Thyroid gland (tissue), 4 donors: ENCODE measurements at regions of chr7 and their contacts with region 1.

Region 1: DNA sequence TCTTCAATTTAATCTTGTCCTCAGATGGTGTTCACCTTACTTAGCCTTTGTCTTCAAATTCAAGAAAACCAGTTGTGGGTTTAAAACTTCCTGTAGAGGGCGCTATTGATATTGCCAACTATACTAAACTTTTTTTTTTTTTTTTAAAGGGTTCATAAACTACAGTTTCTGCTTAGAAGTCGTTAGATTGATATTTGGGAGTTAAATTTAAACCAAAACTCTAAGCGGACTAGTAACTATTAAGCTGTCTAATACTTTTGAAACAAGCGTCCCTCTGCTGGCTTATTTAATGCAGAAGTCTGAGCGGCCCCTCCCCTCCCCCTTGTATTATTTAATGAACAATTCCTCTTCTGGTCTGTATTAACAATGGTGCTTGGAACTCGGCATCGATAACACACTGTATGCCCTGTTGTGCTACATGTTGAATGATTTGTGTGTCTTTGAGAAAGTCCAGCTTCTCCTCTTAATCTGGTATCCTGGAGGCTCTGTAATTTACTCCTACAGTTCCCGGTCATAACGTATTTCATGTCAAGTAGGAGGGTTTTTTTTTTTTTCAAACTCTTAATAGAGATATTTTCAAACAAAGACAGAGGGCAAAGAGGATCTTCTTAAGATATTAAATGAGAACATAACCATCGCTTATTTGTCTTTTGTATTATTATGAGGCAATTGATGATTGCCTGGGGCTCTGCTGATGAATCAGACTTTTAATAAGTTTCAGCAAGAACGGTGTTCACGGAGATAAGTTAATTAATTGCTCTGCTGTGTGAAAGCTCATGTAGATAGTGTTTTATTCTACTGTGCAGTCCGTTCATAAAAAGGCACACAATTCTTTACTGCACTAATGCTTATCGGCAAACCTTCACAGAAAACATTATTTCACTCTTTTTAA is 22.6 kb upstream of the CREB5 start:
- DNase-seq: no peak
- H3K4me3 ChIP-seq: no peak overlapping the region
- H3K27ac ChIP-seq: no peak overlapping the region
- H3K4me1 ChIP-seq: no peaks in the 10 kb centered on the region
- H3K27me3 ChIP-seq: no peaks in the 10 kb centered on the region
- CTCF ChIP-seq: peak; percentile 37 to 80 (median 66)
- POLR2A ChIP-seq: no peak

Region 2: DNA sequence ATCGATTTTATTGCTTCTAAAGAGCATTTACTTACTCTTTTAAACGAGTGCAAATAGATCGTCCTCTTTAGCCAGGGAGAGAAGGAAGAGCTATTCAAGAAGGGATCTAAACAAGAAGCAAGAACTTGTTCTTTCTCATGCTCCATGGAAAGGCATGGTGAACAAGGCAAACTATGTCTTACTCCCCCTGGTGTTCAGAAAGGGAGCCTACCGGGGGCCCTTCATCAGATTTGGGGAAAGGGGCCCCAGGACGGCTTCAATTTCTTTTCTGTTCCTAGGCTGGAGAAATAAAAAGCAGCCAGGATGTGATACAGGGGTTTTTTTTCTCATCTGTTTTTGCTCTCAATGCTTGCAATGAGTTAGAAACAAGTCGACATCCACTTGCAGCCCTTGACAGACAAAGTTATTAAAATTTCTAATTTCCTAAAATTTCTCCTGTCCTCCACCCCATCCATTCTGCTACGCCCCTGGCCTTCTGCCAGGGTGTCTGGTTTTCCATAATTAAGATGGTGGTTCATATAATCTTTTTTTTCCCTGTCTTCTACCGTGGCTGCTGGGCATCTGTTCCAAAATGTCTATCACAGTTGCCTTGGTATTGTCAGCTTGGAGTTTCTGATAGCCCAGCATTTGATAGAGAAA is 237.0 kb after region 1 on chr7:
- intact Hi-C with region 1: loop called (anchors 10 kb)
- DNase-seq: peak; percentile 26
- H3K4me3 ChIP-seq: no peak overlapping the region
- H3K27ac ChIP-seq: no peak overlapping the region
- H3K4me1 ChIP-seq: peaks cover 0 to 5% of the 10 kb centered on the region in 2 donors
- H3K27me3 ChIP-seq: no peaks in the 10 kb centered on the region
- CTCF ChIP-seq: peak; percentile 22 to 67 (median 56)
- POLR2A ChIP-seq: no peak

Region 3: DNA sequence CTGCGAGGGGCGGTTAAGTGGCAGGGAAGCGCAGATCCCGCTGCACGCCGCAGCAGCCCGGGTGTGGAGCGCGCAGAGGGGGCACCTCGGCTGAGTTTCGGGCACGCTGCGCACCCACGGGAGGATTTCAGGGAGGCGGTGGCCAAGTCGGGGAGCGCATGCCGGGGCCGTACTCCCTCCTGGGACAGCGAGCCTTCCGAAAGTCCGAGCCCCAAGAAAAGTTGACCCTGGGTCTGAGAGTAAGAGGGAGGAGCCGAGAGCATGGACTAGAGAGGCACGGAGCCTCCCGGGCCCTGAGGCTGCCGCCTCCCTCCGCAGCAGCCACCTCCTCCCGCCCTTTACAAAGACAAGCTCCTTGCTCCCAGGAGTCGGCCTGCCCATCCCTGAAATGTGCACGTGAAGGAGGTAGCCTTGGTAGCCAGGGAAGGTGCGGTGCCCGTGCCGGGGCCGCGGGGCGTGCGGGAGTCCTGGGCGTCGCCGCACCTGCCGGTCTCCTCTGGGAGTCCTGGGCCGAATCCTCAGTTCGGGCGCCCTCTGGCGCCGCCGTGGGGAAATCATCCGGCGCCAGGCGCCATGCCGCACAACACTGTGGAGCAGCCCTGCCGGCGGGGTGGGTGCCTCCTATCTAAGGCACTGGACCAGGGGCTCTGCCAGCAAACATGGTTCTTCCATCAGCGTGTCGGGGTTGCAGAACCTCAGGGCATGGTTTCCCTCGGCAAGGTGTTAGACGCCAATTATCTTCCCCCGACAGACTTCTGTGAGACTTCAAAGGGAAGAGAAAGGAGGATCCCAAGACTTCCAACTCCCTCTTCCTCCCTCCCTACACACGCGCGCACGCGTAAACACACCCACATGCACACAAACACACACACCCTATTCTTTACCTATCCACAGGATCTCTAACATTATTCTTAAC is 464.3 kb after region 1 on chr7:
- intact Hi-C with region 1: loop called (anchors 5 kb)
- DNase-seq: peak; percentile 68 to 74
- H3K4me3 ChIP-seq: peak overlapping the region in 2 of 3 donors; percentile 6 to 23
- H3K27ac ChIP-seq: no peak overlapping the region
- H3K4me1 ChIP-seq: peaks cover 0 to 6% of the 10 kb centered on the region in 2 donors
- H3K27me3 ChIP-seq: peaks cover 2% of the 10 kb centered on the region
- CTCF ChIP-seq: peak; percentile 71 to 91 (median 76)
- POLR2A ChIP-seq: no peak